CD8-positive, alpha-beta T cell (primary cell): ENCODE measurements at regions of chr5 and their contacts with region 1.

Region 1: DNA sequence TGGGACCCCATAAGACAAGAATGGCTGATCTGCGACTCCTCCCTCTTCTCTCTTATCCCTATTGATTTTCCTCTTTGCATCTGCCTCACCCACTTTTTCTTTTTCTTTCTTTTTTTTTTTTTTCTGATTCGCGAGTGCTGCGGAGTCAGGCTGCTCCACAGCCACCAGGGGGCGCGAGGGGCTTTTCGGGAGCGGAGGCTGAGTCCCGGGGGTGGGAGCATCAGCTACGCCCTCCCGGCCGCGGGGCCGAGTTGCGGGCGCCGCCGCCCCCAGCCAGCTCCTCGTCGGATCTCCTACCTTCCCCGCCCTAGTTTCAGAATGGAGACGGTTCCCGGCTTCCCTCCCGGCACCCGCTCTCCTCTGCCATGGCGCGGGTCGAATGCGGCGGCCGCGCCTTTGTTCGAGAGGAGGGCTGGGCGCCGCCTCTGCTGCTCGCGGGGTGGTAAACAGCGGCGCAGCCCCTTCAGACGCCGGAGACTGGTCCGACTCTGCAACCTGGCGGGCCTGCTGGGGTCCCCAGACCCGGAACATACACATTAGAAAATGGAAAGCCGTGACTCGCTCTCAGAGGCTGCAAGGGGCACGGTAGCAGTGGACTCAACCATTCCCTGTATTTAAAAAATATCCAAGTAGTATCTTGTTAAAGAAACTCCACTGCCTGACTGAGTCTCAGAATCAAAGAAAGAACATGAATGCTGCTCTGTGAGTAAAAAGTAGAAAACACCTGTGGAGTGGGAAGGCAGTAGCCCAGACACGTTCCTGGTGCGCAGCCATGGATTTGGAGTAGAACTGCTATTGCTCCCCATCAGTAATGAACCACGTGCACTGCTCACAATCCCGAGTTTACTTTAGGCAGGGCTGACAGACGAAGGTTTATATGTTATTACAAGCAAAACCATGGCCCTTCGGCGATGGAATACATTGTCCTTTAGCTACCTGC is 55.7 kb downstream of the DPYSL3 start:
- DNase-seq: peak; percentile 25 to 76 (median 66)
- ATAC-seq: peak; percentile 71
- H3K4me3 ChIP-seq: peak overlapping the region; percentile 41 to 44
- H3K4me3 Mint-ChIP-seq: peak overlapping the region; percentile 82
- H3K27ac ChIP-seq: no peak overlapping the region
- H3K27ac Mint-ChIP-seq: no peak overlapping the region
- H3K4me1 ChIP-seq: peaks cover 13% of the 10 kb centered on the region
- H3K4me1 Mint-ChIP-seq: peaks cover 13% of the 10 kb centered on the region
- H3K27me3 ChIP-seq: peaks cover 12 to 17% of the 10 kb centered on the region in 2 experiments
- H3K27me3 Mint-ChIP-seq: peaks cover 76% of the 10 kb centered on the region
- CTCF ChIP-seq: peak; percentile 78

Region 2: DNA sequence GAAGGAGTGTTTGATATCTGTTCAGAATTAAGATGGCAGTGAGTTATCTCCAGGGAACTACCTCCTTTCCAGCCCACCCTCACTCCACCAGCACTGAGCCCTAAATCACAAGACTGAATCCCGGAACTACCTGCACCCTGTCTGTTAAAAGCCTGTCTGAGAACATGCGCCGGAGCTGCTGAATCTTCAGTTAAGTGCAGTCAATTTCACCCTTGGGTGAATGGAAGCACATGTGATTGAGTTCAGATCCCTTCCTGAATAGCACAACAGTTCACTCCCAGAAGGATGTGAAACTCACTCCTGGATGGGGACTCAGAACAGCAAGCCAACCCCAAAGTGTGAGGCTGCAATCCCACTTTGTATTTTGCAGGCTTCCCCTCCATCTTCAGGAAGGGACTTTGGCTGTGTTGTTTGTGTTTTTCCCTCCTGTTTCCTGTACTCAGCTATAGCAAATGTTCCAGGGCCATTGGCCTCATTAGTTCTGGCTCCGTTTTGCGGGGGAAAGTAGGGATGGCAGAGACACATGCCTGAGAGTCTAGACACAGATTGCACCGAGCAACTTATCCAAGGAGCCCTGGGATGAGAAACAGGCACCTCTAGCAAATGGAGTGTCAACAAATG is 12.3 kb after region 1 on chr5:
- CTCF ChIA-PET with region 1: interaction called, 11 read pairs
- POLR2A ChIA-PET with region 1: no interaction called
- intact Hi-C with region 1: no loop called
- DNase-seq: no peak
- ATAC-seq: no peak
- H3K4me3 ChIP-seq: no peak overlapping the region
- H3K4me3 Mint-ChIP-seq: no peak overlapping the region
- H3K27ac ChIP-seq: no peak overlapping the region
- H3K27ac Mint-ChIP-seq: no peak overlapping the region
- H3K4me1 ChIP-seq: no peaks in the 10 kb centered on the region
- H3K4me1 Mint-ChIP-seq: no peaks in the 10 kb centered on the region
- H3K27me3 ChIP-seq: no peaks in the 10 kb centered on the region
- H3K27me3 Mint-ChIP-seq: peaks cover 3% of the 10 kb centered on the region
- CTCF ChIP-seq: no peak